CD4-positive, alpha-beta memory T cell (primary cell): ENCODE measurements at regions of chr1 and their contacts with region 1.

Region 1: DNA sequence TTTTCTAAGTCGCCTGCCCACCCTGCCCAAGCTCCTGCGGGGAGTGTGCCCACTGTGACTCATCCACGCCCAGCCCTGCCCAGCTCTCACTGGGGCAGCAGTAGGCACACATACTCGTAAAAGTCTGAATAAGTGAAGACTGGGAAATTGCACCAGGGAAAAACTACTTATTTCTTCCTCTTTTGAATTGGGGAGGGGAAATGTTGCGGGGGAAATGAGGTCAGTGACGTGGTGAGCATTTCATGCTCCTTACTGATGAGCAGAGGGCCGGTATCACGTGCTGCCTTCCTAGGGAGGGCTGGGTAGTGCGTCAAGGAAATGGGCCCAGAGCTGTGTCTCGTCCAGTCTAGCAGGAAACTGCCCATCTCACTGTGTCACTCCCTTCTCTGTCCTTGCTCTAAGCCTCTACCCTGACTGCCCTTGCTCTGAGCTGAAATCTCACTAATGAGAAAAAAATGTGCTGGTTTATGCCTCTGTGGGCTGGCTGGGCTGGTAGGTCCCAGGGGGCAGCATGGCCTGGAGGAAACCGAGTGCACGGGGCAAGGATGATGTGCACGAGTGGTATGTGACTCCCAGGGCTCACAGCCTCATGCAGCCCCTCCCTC is 13.5 kb upstream of the TNFRSF1B start:
- DNase-seq: peak in 1 of 5 donors; percentile 73
- H3K4me3 ChIP-seq: peak overlapping the region in 1 of 2 donors; percentile 17
- H3K4me3 Mint-ChIP-seq: peak overlapping the region in 7 of 8 donors; percentile 30 to 78 (median 63)
- H3K27ac ChIP-seq: peak overlapping the region; percentile 51
- H3K27ac Mint-ChIP-seq: peak overlapping the region; percentile 92 to 99 (median 97)
- H3K4me1 ChIP-seq: peaks cover 96% of the 10 kb centered on the region
- H3K4me1 Mint-ChIP-seq: peaks cover 71 to 92% (median 84%) of the 10 kb centered on the region in 4 donors
- H3K27me3 ChIP-seq: no peaks in the 10 kb centered on the region
- H3K27me3 Mint-ChIP-seq: no peaks in the 10 kb centered on the region

Region 2: GRCh38 chr1:12166834-12167492 is 13.7 kb after region 1 on chr1 and contains the start of gene TNFRSF1B:
- CTCF ChIA-PET with region 1: interaction called, 17 read pairs
- POLR2A ChIA-PET with region 1: interaction called, 1,713 read pairs
- intact Hi-C with region 1: loop called (anchors 1 kb)
- DNase-seq: peak; percentile 57 to 75 (median 63)
- H3K4me3 ChIP-seq: peak within 1 kb of the TSS; percentile 85 to 93
- H3K4me3 Mint-ChIP-seq: peak within 1 kb of the TSS; percentile 100
- H3K27ac ChIP-seq: peak within 1 kb of the TSS; percentile 88
- H3K27ac Mint-ChIP-seq: peak within 1 kb of the TSS; percentile 99 to 100 (median 99)
- H3K4me1 ChIP-seq: peaks cover 85% of the 10 kb centered on the region
- H3K4me1 Mint-ChIP-seq: peaks cover 43 to 81% (median 65%) of the 10 kb centered on the region in 4 donors
- H3K27me3 ChIP-seq: no peaks in the 10 kb centered on the region
- H3K27me3 Mint-ChIP-seq: no peaks in the 10 kb centered on the region
- total RNA-seq, gene TNFRSF1B: 111 TPM